ENCODE measurements at regions of chr3 and their contacts with region 1.

Region 1: GRCh38 chr3:186849374-186849975 is 7.0 kb downstream of the ADIPOQ start:
- DNase-seq: peak; percentile 60
- H3K4me3 ChIP-seq: no peak overlapping the region; a peak in 1 of 4 replicates
- H3K27ac ChIP-seq: no peak overlapping the region
- H3K4me1 ChIP-seq: no peaks in the 10 kb centered on the region
- H3K27me3 ChIP-seq: peaks cover 17% of the 10 kb centered on the region; the same call in 1 of the 2 replicates
- CTCF ChIP-seq: peak; percentile 66
- EP300 ChIP-seq: no peak
- RAD21 ChIP-seq: peak; percentile 80

Region 2: GRCh38 chr3:186514296-186515002 is 335.0 kb before region 1 on chr3:
- CTCF ChIA-PET with region 1: no interaction called
- POLR2A ChIA-PET with region 1: no interaction called
- DNase-seq: no peak
- H3K4me3 ChIP-seq: 0 out of 4 replicates have a peak overlapping the region, but pooled peaks of 1 of the 2 experiments have one; percentile 12
- H3K27ac ChIP-seq: no peak overlapping the region
- H3K4me1 ChIP-seq: peaks cover 0 to 2% of the 10 kb centered on the region in 2 experiments; a peak in 2 of 4 replicates
- H3K27me3 ChIP-seq: no peaks in the 10 kb centered on the region; the same call in 1 of the 2 replicates
- CTCF ChIP-seq: peak; percentile 39
- EP300 ChIP-seq: no peak
- RAD21 ChIP-seq: no peak

Region 3: GRCh38 chr3:187150599-187150998 is 301.1 kb after region 1 on chr3:
- CTCF ChIA-PET with region 1: interaction called, 10 read pairs
- POLR2A ChIA-PET with region 1: no interaction called
- DNase-seq: no peak
- H3K4me3 ChIP-seq: no peak overlapping the region
- H3K27ac ChIP-seq: no peak overlapping the region
- H3K4me1 ChIP-seq: no peaks in the 10 kb centered on the region
- H3K27me3 ChIP-seq: peaks cover 5% of the 10 kb centered on the region; the same call in 1 of the 2 replicates
- CTCF ChIP-seq: peak; percentile 36; the same call in 1 of the 2 replicates
- EP300 ChIP-seq: no peak
- RAD21 ChIP-seq: peak; percentile 22

Region 4: GRCh38 chr3:187305881-187306280 is 456.4 kb after region 1 on chr3:
- CTCF ChIA-PET with region 1: no interaction called
- POLR2A ChIA-PET with region 1: no interaction called
- DNase-seq: no peak
- H3K4me3 ChIP-seq: no peak overlapping the region
- H3K27ac ChIP-seq: no peak overlapping the region
- H3K4me1 ChIP-seq: no peaks in the 10 kb centered on the region
- H3K27me3 ChIP-seq: no peaks in the 10 kb centered on the region
- CTCF ChIP-seq: no peak
- EP300 ChIP-seq: no peak
- RAD21 ChIP-seq: no peak

Measured in SK-N-SH (cell line).